Dorsolateral prefrontal cortex (tissue), 120 donors: ENCODE measurements at regions of chr7 and their contacts with region 1.

Region 1: DNA sequence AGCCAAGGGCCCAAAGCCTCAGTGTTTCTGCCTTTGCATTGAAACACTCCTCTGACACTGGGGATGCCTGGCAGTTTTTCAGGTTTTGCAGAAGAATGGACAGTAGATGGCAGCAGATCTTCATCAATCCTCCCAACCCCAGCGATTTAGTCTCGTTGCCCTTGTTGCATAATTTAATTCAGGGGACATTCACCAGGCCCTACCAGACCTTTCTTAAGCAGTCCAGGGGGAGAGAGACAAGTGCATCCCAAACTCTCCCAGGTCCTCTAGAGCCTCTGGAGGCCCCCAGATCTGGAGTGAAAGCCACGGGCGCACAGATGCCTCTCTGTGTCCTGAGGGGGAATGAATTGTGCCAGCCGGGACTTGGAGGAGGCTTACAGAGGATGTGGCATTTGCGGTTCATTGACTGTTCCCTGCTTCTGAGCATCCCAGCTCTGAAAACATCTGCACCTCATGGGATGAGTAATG is 29.6 kb downstream of the MINDY4 start:
- DNase-seq: peak in 7 of 10 donors; percentile 46 to 82 (median 68)
- H3K4me3 ChIP-seq: peak overlapping the region in 22 of 59 donors; percentile 0 to 48 (median 32)
- H3K27ac ChIP-seq: peak overlapping the region in 29 of 59 donors; percentile 2 to 82 (median 54)
- H3K27me3 ChIP-seq: peaks cover 0 to 18% (median 0%) of the 10 kb centered on the region in 45 donors
- CTCF ChIP-seq: peak; percentile 35 to 91 (median 79)

Region 2: DNA sequence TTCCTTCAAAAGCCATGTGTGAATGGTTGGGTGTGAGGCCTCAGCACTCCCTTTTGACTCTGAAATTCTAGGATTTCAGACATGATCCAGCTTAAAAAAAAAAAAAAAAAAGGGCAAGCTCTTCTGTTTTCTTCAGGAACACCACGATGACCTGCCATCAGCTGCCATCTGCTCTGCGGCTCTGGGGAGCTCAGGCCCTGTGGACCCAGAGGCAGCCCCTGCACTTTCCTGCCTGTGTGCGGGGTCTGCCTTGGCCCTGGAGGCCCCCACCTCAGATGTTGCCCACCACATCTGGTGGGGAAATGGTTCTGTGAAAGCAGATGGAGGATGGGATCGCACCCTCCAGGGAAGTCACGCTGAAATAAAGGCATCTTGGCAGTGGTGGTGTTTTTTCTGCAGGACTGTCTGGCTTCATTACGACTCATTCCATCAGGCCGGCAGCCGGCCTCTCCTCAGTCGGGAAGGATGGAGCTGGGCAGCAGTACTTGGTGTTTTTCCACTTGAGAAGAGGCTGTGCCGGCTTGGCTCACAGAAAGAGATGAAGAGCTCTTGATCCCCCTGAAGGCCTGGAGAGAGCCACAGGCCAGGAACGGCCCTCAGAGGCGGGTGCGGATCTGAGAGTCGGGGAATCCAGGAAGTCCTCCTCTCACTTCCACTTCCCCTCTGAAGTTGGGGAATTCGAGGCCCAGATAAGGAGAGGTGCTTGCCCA is 44.8 kb after region 1 on chr7:
- intact Hi-C with region 1: no loop called
- DNase-seq: peak in 2 of 10 donors; percentile 44 to 90
- H3K4me3 ChIP-seq: no peak overlapping the region
- H3K27ac ChIP-seq: peak overlapping the region in 43 of 59 donors; percentile 3 to 94 (median 49)
- H3K27me3 ChIP-seq: no peaks in the 10 kb centered on the region
- CTCF ChIP-seq: no peak

Region 3: DNA sequence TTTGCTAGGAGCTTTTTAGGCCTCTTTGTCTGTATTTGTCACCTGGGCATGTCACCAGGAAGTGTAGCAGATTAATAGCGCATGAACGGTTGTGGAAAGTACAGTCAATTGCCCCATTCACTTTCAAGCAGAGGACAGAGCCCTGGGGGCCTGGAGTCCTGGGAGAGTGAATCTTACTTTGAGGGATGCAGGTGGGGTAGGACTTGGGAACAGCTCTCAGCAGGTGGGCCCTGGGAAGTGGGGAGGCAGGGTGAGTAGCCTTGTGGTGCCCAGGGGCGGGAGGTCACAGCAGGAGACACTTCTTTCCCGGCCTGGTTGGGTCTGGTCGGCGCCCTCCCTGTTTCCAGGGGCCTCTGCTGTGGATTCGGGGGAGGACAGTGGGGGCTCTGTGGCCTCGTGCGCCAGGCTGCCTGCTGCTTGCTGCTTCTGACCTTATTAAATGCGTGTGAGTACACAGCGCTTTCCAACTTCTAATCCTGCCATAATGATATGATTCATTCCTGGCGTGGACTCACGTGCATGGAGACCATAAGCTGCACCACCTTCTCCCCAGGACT is 59.2 kb after region 1 on chr7:
- intact Hi-C with region 1: no loop called
- DNase-seq: no peak
- H3K4me3 ChIP-seq: no peak overlapping the region
- H3K27ac ChIP-seq: no peak overlapping the region
- H3K27me3 ChIP-seq: no peaks in the 10 kb centered on the region
- CTCF ChIP-seq: no peak

Region 4: GRCh38 chr7:30911561-30911969 is 110.7 kb after region 1 on chr7 and contains the start of gene AQP1:
- intact Hi-C with region 1: loop called in 1 of 2 experiments (anchors 10 kb)
- DNase-seq: peak in 4 of 10 donors; percentile 15 to 47 (median 36)
- H3K4me3 ChIP-seq: peak within 1 kb of the TSS in 27 of 59 donors; percentile 3 to 50 (median 26)
- H3K27ac ChIP-seq: peak within 1 kb of the TSS in 1 of 59 donors; percentile 7
- H3K27me3 ChIP-seq: no peaks in the 10 kb centered on the region
- CTCF ChIP-seq: no peak
- total RNA-seq, gene AQP1: 11.4 to 553 (median 98.9) TPM

Region 5: DNA sequence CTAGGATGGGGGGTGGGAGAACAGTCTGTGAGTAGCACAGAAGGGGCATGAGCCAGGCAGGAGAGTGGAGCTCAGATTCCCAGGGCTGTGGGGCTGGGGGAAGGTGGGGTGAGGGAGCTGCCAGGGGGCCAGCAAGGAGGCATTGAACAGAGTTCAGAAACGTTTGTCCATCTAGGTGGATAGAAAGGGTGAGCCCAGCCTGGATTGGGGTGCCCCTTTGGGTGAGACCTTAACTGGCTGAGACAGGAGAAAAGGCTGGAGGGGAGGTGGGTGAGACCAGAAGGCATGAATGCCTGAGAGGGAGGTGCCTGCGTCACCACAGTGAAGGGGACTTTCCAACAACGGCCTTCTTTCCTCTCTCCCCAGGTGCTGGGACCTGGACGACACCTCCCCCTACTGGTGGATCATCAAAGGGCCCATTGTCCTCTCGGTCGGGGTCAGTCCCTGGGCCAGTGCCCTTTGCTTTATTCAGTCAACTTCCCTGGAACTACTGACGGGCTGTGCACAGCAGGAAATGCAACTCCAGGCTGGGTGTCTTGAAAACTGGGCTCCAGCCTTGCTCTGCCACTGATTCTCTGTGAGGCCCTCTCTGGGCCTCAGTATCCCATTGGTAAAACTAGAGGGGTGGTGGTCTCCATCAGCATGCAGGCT is 173.9 kb after region 1 on chr7:
- intact Hi-C with region 1: loop called in 1 of 2 experiments (anchors 5 kb)
- DNase-seq: peak in 1 of 10 donors; percentile 30
- H3K4me3 ChIP-seq: no peak overlapping the region
- H3K27ac ChIP-seq: no peak overlapping the region
- H3K27me3 ChIP-seq: peaks cover 0 to 85% (median 25%) of the 10 kb centered on the region in 45 donors
- CTCF ChIP-seq: peak in 54 of 56 donors; percentile 14 to 65 (median 42)

Region 6: GRCh38 chr7:30983042-30983913 is 182.5 kb after region 1 on chr7:
- intact Hi-C with region 1: loop called (anchors 5 kb)
- DNase-seq: peak; percentile 79 to 94 (median 87)
- H3K4me3 ChIP-seq: peak overlapping the region in 46 of 59 donors; percentile 12 to 57 (median 36)
- H3K27ac ChIP-seq: peak overlapping the region in 5 of 59 donors; percentile 9 to 46 (median 30)
- H3K27me3 ChIP-seq: peaks cover 0 to 31% (median 5%) of the 10 kb centered on the region in 45 donors
- CTCF ChIP-seq: peak; percentile 77 to 99 (median 94)

Region 7: GRCh38 chr7:31122649-31123058 is 321.8 kb after region 1 on chr7:
- intact Hi-C with region 1: loop called (anchors 2 to 5 kb)
- DNase-seq: peak in 7 of 10 donors; percentile 53 to 77 (median 74)
- H3K4me3 ChIP-seq: no peak overlapping the region
- H3K27ac ChIP-seq: no peak overlapping the region
- H3K27me3 ChIP-seq: peaks cover 0 to 44% (median 7%) of the 10 kb centered on the region in 45 donors
- CTCF ChIP-seq: peak; percentile 53 to 93 (median 85)

Region 8: DNA sequence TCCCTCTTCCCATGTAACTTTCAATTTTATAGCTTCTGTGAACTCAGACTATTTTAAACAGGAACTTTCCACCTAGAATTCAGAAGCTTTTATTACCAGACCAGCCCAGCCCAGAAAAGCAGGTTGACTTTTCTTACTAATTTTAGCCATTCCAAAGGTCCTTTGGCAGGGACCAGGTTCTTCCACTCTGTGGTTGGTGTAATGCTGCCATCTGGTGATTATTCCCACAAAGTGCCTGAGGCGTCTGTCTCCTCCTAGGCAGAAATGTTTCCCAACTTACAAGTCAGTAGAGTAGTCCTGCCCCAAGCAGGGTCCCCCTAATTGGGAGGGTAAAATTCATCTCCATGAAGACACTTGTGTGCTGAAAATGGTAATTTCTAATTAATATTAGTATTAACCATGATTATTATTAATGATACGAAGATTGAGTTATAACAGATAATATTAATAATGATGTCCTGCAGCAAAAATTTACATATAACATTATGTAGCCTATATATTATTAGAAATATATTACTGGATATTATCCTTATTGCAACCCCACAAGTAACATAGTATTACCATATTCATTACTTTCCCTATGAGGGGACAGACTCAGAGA is 833.2 kb after region 1 on chr7:
- intact Hi-C with region 1: loop called in 1 of 2 experiments (anchors 10 kb)
- DNase-seq: peak in 9 of 10 donors; percentile 29 to 71 (median 57)
- H3K4me3 ChIP-seq: no peak overlapping the region
- H3K27ac ChIP-seq: no peak overlapping the region
- H3K27me3 ChIP-seq: no peaks in the 10 kb centered on the region
- CTCF ChIP-seq: peak; percentile 44 to 94 (median 78)

Region 9: DNA sequence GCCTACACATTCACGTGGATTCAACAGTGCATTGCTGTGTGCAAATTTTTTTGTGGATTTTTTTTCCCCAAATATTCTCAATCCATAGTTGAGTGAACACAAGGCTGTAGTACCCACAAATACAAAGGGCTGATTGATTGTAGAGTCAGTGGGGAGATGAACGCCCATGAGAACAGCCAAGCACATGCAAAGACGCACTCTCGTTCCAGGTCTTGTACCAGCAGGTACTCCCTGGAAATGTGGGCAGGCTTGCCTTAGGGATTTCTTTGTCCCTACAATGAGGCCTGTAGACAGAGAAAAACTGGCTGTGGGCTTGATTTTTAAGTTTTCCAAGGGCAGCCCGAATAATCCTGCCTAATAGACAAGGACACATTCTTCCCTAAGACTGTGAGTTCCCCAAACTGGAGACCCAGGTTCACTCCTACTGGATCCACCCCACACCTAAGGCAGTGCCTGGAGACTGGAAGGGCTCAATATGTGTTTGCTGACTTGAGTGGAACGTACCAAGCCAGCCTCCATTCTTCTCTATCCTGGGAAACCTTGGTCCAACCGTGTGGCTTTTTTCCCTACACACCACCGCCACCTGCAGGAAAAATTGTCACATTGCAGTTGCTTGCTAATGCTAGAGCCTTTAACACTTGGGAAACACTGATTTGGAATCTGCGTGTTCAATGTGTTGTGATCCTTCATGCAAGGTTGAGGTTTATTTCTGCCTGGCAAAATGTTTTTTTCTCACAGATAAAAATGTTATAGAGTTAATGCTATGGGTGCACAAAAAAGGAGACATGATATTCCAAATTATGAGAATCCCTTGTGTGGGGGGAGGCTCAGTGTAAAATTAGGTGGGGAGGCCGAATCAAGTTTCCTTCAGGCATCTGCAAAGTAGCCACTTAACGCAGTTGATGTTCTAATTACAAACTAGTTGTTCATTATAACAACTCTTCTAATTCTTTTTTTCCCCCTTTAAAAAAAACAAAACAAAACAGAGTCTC is 935.5 kb after region 1 on chr7:
- intact Hi-C with region 1: loop called in 1 of 2 experiments (anchors 5 kb)
- DNase-seq: peak; percentile 59 to 84 (median 74)
- H3K4me3 ChIP-seq: peak overlapping the region in 42 of 59 donors; percentile 3 to 59 (median 33)
- H3K27ac ChIP-seq: peak overlapping the region in 8 of 59 donors; percentile 10 to 54 (median 40)
- H3K27me3 ChIP-seq: no peaks in the 10 kb centered on the region
- CTCF ChIP-seq: peak; percentile 86 to 99 (median 96)